PC-3 (cell line): ENCODE measurements at regions of chr5 and their contacts with region 1.

Region 1: GRCh38 chr5:149517461-149518122 is 33.6 kb downstream of the CSNK1A1 start:
- DNase-seq: no peak
- ATAC-seq: no peak
- H3K4me3 ChIP-seq: no peak overlapping the region
- H3K27ac ChIP-seq: no peak overlapping the region
- H3K4me1 ChIP-seq: peaks cover 31% of the 10 kb centered on the region
- H3K27me3 ChIP-seq: no peaks in the 10 kb centered on the region
- CTCF ChIP-seq: no peak

Region 2: DNA sequence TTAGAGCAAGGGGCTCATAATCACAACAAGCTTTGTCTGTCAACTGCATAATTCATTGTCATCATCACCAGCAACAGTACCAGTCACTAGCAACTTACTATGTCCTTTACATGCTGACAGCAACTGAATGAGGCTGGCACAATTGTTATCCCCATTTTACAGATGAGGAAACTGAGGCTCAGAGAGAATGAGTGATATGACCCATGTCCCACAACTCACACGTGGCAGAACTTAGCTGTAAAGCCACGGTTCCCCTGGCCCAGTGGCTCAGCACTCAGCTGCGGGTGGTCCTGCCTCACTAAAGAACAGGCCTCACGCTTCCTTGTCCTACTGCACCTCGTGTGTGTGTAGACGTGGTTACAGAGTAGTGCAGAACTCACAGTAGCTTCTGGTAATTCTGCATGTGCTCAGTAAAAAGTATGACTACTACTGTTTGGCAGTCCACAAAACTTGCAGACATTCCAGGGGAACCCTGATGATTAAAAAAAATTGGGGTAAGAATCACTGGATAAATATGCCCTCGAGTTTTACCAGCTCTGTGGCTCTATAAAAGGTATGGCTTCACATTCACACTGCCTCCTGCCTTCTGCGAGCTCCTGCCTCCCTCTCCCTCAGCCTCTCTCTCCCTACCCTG is 215.7 kb before region 1 on chr5:
- CTCF ChIA-PET with region 1: no interaction called
- POLR2A ChIA-PET with region 1: no interaction called
- intact Hi-C with region 1: no loop called
- DNase-seq: no peak
- ATAC-seq: no peak
- H3K4me3 ChIP-seq: no peak overlapping the region
- H3K27ac ChIP-seq: no peak overlapping the region
- H3K4me1 ChIP-seq: no peaks in the 10 kb centered on the region
- H3K27me3 ChIP-seq: no peaks in the 10 kb centered on the region
- CTCF ChIP-seq: no peak

Region 3: DNA sequence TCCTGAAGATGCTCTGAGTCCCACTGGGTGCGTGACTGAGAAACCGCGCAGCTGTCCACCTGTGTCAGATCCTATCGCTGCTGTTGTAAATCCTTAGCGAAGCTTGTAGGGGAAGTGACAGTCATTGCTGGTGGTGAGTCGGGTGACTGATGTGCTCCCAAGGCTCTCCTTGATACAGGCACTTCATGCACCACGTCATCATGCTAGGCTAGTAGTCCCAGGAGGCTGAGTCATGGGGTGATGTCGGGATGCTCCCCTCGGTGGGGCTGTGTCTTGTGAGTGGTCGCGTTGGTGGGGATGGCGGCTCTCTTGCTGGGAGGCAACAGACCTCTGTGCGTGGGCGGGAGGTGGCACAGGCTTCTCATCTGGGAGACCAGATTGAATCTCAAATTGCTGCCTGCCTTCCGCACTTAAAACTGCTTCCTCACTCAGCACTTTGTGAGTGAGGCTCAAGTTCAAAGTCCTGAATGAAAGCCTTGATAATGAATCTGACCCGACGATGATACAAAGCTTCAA is 51.1 kb before region 1 on chr5:
- CTCF ChIA-PET with region 1: no interaction called
- POLR2A ChIA-PET with region 1: interaction called, 11 read pairs
- intact Hi-C with region 1: no loop called
- DNase-seq: peak; percentile 66
- ATAC-seq: peak; percentile 75
- H3K4me3 ChIP-seq: no peak overlapping the region
- H3K27ac ChIP-seq: peak overlapping the region; percentile 5; the same call in 1 of the 2 replicates
- H3K4me1 ChIP-seq: peaks cover 21% of the 10 kb centered on the region
- H3K27me3 ChIP-seq: no peaks in the 10 kb centered on the region
- CTCF ChIP-seq: no peak

Region 4: DNA sequence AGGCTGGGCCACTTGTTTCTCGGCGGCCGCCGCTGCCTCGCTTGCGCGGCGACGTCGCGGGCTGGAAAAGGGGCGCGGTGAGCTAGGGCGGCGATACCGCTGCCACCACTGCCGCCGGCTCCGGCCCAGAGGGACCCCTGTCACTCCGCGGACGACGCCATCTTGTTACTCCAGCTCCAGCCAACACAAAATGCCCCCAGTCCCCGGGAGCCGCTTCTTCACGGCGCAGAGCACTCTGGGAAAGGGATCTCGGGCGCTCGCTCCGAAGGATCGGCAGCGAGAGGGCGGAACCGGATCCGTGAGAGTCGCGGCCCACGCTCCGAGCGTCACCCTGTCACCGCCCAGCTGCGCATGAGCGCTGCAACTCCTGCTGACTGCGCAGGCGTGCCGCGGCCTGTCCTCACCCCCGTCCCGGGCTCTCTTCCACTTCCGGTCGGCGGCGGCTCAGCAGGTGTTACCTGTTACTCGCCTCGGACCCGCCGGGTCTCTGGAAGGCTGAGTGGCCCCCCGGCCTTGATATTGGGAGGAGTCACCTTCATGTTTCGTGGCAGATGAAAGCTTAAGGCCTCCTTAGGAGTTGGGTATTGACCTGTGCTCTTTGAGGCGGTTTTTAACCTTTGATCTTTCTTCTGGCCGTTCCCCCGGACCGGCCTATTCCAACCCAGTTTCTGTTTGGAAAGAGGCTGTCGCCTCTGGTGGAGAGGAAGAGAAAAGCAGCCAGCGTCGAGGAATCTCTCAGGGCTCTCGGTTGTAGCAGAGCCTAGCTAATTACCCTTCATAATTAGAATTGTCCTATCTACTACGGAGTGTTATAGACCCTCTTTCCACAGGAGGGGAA is 33.8 kb after region 1 on chr5 and contains the start of gene CSNK1A1:
- CTCF ChIA-PET with region 1: no interaction called
- POLR2A ChIA-PET with region 1: interaction called, 5 read pairs
- intact Hi-C with region 1: loop called (anchors 1 kb)
- DNase-seq: peak; percentile 100
- ATAC-seq: peak; percentile 89
- H3K4me3 ChIP-seq: peak within 1 kb of the TSS; percentile 93
- H3K27ac ChIP-seq: peak within 1 kb of the TSS; percentile 85
- H3K4me1 ChIP-seq: peaks cover 36% of the 10 kb centered on the region
- H3K27me3 ChIP-seq: no peaks in the 10 kb centered on the region
- CTCF ChIP-seq: peak; percentile 98
- total RNA-seq, gene CSNK1A1: 500 and 586 TPM in 2 replicates